Activated T-helper 1 cell treated with anti-CD3 and anti-CD28 coated beads, Interleukin-12 subunit alpha, Interleukin-12 subunit beta, Interleukin-2, Interleukin-4 antibody, amounts not matched to agents 30 ng/mL and 10 ng/mL and 1 ng/mL, durations not matched to agents 14 hours and 24 hours and 36 hours (primary cell): ENCODE measurements at regions of chr3 and their contacts with region 1.

Region 1: GRCh38 chr3:72405943-72406566 is 442.2 kb downstream of the SHQ1 start:
- DNase-seq: no peak
- H3K4me3 Mint-ChIP-seq: no peak overlapping the region
- H3K27ac Mint-ChIP-seq: no peak overlapping the region
- H3K4me1 Mint-ChIP-seq: peaks cover 59% of the 10 kb centered on the region
- H3K27me3 Mint-ChIP-seq: no peaks in the 10 kb centered on the region

Region 2: DNA sequence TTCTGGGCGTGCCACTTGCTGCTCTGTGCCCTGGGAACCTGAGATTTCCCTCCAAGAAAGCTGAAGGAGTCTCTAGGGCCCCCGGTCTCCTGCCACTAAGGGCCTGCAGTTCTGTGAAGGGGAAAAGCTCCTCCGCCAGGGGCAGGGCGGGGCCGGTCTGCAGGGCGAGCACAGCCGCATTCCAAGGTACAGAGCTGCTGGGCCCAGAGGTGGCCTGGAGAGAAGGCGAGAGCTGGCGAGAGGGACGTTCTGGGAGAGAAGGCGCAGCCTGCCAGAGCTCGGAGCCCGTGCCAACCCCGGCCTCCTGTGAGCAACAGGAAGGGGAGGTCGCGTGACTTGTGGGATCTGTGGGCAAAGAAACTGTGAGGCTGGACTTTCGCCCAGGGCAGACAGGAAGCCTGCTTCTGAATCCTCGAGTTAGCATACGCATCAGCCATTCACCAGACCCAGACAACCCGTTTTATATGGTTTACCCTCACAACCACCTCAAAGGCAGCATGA is 58.2 kb before region 1 on chr3:
- intact Hi-C with region 1: no loop called
- DNase-seq: no peak
- H3K4me3 Mint-ChIP-seq: no peak overlapping the region
- H3K27ac Mint-ChIP-seq: no peak overlapping the region
- H3K4me1 Mint-ChIP-seq: peaks cover 52% of the 10 kb centered on the region
- H3K27me3 Mint-ChIP-seq: no peaks in the 10 kb centered on the region

Region 3: GRCh38 chr3:72395776-72396311 is 10.2 kb before region 1 on chr3:
- intact Hi-C with region 1: loop called (anchors 2 kb)
- DNase-seq: no peak
- H3K4me3 Mint-ChIP-seq: no peak overlapping the region
- H3K27ac Mint-ChIP-seq: no peak overlapping the region
- H3K4me1 Mint-ChIP-seq: peaks cover 32% of the 10 kb centered on the region
- H3K27me3 Mint-ChIP-seq: no peaks in the 10 kb centered on the region

Region 4: GRCh38 chr3:72439321-72440183 is 33.5 kb after region 1 on chr3:
- intact Hi-C with region 1: loop called (anchors 5 kb)
- DNase-seq: no peak
- H3K4me3 Mint-ChIP-seq: no peak overlapping the region
- H3K27ac Mint-ChIP-seq: no peak overlapping the region
- H3K4me1 Mint-ChIP-seq: peaks cover 84% of the 10 kb centered on the region
- H3K27me3 Mint-ChIP-seq: no peaks in the 10 kb centered on the region